A673 (cell line): ENCODE measurements at regions of chr1 and their contacts with region 1.

Region 1: GRCh38 chr1:184513421-184513820 is 126.6 kb downstream of the C1orf21 start:
- DNase-seq: no peak
- H3K4me3 ChIP-seq: no peak overlapping the region
- H3K27ac ChIP-seq: no peak overlapping the region
- H3K4me1 ChIP-seq: peaks cover 4% of the 10 kb centered on the region
- H3K27me3 ChIP-seq: no peaks in the 10 kb centered on the region
- CTCF ChIP-seq: no peak

Region 2: DNA sequence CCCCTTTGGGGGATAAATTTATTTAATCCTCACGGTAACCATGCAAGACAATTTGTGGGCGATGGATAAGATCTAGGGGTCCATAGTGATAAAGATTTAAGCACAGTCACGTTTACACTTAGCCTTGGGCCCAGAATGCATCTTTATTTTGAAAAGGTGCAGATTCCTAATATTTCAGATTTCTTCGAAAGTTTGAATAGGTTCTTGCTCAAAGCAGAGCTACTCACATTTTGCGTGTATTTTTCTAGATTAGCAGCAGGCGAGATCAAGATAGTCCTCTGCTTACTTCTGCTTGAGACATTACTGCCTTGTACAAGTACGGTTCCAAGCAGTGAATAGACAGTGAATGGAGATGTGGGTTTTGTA is 461.2 kb before region 1 on chr1:
- CTCF ChIA-PET with region 1: no interaction called
- POLR2A ChIA-PET with region 1: interaction called, 10 read pairs
- intact Hi-C with region 1: no loop called
- DNase-seq: no peak
- H3K4me3 ChIP-seq: peak overlapping the region; percentile 69
- H3K27ac ChIP-seq: peak overlapping the region; percentile 98
- H3K4me1 ChIP-seq: peaks cover 24% of the 10 kb centered on the region
- H3K27me3 ChIP-seq: no peaks in the 10 kb centered on the region
- CTCF ChIP-seq: no peak

Region 3: GRCh38 chr1:184536246-184536985 is 23.0 kb after region 1 on chr1:
- CTCF ChIA-PET with region 1: no interaction called
- POLR2A ChIA-PET with region 1: no interaction called
- intact Hi-C with region 1: loop called (anchors 2 kb)
- DNase-seq: no peak
- H3K4me3 ChIP-seq: no peak overlapping the region
- H3K27ac ChIP-seq: no peak overlapping the region
- H3K4me1 ChIP-seq: no peaks in the 10 kb centered on the region
- H3K27me3 ChIP-seq: no peaks in the 10 kb centered on the region
- CTCF ChIP-seq: no peak

Region 4: GRCh38 chr1:184617433-184618029 is 104.1 kb after region 1 on chr1:
- CTCF ChIA-PET with region 1: no interaction called
- POLR2A ChIA-PET with region 1: interaction called, 21 read pairs
- intact Hi-C with region 1: no loop called
- DNase-seq: no peak
- H3K4me3 ChIP-seq: no peak overlapping the region
- H3K27ac ChIP-seq: no peak overlapping the region
- H3K4me1 ChIP-seq: peaks cover 11% of the 10 kb centered on the region
- H3K27me3 ChIP-seq: no peaks in the 10 kb centered on the region
- CTCF ChIP-seq: no peak

Region 5: DNA sequence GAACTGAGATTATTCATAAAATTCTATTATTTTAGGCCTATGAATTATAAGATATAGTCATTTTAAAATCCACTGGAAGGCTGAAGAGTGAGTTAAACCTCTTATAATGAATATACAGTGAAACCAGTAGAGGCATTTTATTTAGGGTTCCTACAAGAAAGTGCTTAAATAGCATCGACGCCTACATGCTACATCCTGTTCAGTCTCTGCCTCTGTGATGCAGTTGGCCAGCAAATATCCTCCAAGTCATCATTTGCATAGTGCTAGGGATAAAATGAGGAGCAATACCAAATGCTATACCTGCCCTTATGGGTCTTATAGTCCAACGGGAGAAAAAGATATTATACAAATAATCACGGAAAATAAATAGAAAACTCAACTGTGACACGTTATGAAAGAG is 181.6 kb after region 1 on chr1:
- CTCF ChIA-PET with region 1: no interaction called
- POLR2A ChIA-PET with region 1: no interaction called
- intact Hi-C with region 1: no loop called
- DNase-seq: no peak
- H3K4me3 ChIP-seq: no peak overlapping the region
- H3K27ac ChIP-seq: no peak overlapping the region
- H3K4me1 ChIP-seq: peaks cover 17% of the 10 kb centered on the region
- H3K27me3 ChIP-seq: no peaks in the 10 kb centered on the region
- CTCF ChIP-seq: no peak

Region 6: GRCh38 chr1:185213091-185213490 is 699.7 kb after region 1 on chr1:
- CTCF ChIA-PET with region 1: no interaction called
- POLR2A ChIA-PET with region 1: no interaction called
- intact Hi-C with region 1: no loop called
- DNase-seq: no peak
- H3K4me3 ChIP-seq: no peak overlapping the region
- H3K27ac ChIP-seq: no peak overlapping the region
- H3K4me1 ChIP-seq: no peaks in the 10 kb centered on the region
- H3K27me3 ChIP-seq: no peaks in the 10 kb centered on the region
- CTCF ChIP-seq: no peak